ENCODE measurements at regions of chr19 and their contacts with region 1.

Region 1: GRCh38 chr19:17135001-17135853 is 59.6 kb downstream of the MYO9B start:
- DNase-seq: peak; percentile 96

Region 2: DNA sequence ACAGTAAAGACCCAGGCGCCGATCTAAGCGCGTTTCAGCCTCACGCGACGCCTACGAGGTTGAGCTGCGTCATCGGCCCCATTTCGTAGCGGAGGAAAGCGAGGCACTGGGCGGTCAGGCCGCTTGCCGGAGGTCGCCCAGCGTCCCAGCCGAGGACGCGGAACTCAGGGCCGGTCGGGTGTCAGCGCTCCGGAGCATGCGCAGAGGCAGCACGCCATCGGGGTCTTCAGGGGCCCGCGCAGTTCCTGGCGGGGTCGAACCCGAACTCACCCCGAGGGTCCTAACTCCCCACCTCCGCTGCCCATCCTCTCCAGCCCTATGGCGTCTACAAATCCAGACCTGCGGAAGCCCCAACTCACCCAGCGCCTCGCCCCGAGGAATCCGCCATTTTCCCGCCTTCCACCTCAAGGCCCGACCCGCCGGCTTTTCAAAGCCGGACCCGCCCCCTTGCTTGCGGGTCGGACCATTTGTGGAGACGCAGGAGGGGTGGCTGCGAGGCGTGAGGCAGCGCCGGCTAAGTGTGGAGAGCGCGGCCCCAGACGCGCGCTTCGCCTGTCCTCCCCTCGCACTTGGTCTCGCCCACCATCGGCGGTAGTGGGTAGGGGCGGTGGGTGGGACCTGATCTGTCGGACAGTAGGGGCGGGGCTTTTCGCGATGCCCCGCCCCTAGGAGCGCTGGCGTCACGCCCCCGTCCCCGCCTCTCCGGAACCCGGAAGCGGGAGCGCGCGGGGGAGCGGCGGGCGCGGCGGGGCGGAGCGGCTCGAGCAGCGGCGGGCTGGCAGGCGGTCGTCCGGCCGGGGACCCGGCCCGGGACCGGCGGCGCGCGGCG is 60.0 kb before region 1 on chr19 and contains the starts of genes HAUS8 and MYO9B:
- intact Hi-C with region 1: loop called (anchors 2 kb)
- DNase-seq: peak; percentile 100
- total RNA-seq, gene HAUS8: 2.6 TPM
- total RNA-seq, gene MYO9B: 35.6 TPM

Region 3: GRCh38 chr19:17107525-17108452 is 27.4 kb before region 1 on chr19:
- intact Hi-C with region 1: loop called (anchors 1 kb)
- DNase-seq: peak; percentile 90

Region 4: DNA sequence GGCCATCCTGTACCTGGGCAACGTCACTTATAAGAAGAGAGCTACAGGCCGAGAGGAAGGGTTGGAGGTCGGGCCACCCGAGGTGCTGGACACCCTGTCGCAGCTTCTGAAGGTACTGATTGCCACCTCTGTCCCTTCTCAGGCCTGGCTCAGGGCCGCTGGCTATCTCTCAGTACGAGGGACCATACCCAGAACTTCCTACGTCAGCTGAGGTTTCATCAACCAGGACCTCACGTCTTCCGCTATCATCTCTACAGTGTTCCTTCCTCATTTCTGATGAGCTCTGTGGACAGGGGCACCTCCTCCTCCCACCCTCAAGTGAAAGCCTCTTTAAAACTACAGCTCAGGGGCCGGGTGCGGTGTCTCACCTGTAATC is 21.7 kb after region 1 on chr19:
- intact Hi-C with region 1: no loop called
- DNase-seq: no peak

Region 5: GRCh38 chr19:17226002-17226933 is 91.0 kb after region 1 on chr19 and contains the start of gene OCEL1:
- intact Hi-C with region 1: no loop called
- DNase-seq: peak; percentile 99
- total RNA-seq, gene OCEL1: 18.8 TPM

Region 6: DNA sequence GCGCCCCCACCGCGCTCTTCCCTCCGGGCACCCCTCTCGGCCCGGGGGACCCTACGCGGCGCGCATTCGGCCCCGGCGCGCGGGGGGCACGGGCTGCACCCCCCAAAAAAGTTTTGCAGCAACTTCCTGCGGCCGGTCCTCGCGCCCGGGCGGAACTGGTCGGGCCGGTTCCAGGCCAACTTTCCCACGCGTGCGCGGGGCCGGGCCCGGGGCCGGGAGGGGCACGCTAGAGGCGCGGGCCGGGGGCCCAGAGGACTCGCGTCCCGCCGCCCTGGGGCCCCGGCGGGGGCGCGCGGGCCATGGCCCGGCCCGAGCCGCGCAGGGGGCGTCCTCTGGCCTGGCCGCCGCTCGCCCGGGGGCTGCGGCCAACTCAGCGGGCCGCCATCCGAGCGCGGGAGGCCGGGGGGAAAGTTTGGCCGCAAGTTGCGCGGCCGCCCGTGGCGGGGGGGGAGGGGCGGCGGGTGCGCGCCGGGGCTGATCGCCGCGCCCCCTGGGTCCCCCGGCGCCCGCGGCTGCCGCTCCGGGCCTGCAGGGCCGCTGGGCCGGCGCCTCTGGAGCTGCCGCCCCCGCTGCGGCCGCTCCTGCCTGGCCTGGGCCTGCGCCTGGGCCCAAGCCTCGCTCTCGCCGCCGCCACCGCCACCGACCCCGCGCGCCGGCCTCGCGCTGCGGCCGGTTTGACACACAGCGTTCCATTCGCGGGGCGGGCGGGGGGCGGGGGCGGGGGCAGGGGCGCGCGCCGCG is 110.2 kb after region 1 on chr19 and contains the start of gene NR2F6:
- intact Hi-C with region 1: loop called (anchors 10 kb)
- DNase-seq: no peak
- total RNA-seq, gene NR2F6: 50.5 TPM

Measured in cardiac septum (tissue), 1 donor.